ENCODE measurements at regions of chr12 and their contacts with region 1.

Region 1: GRCh38 chr12:104381731-104382480 is 74.8 kb upstream of the CHST11 start:
- DNase-seq: peak; percentile 78
- H3K4me3 ChIP-seq: peak overlapping the region in 1 of 2 experiments; percentile 3; a peak in 1 of 4 replicates
- H3K27ac ChIP-seq: no peak overlapping the region
- H3K4me1 ChIP-seq: peaks cover 0 to 1% of the 10 kb centered on the region in 2 experiments; a peak in 1 of 4 replicates
- H3K27me3 ChIP-seq: no peaks in the 10 kb centered on the region
- CTCF ChIP-seq: peak; percentile 98
- EP300 ChIP-seq: no peak
- RAD21 ChIP-seq: peak; percentile 97

Region 2: GRCh38 chr12:104365921-104366415 is 15.9 kb before region 1 on chr12:
- CTCF ChIA-PET with region 1: interaction called, 31 read pairs
- POLR2A ChIA-PET with region 1: no interaction called
- DNase-seq: no peak
- H3K4me3 ChIP-seq: no peak overlapping the region
- H3K27ac ChIP-seq: no peak overlapping the region
- H3K4me1 ChIP-seq: no peaks in the 10 kb centered on the region
- H3K27me3 ChIP-seq: no peaks in the 10 kb centered on the region
- CTCF ChIP-seq: no peak
- EP300 ChIP-seq: no peak
- RAD21 ChIP-seq: no peak

Region 3: GRCh38 chr12:104435765-104436164 is 53.9 kb after region 1 on chr12:
- CTCF ChIA-PET with region 1: interaction called, 10 read pairs
- POLR2A ChIA-PET with region 1: no interaction called
- DNase-seq: no peak
- H3K4me3 ChIP-seq: no peak overlapping the region
- H3K27ac ChIP-seq: no peak overlapping the region
- H3K4me1 ChIP-seq: no peaks in the 10 kb centered on the region
- H3K27me3 ChIP-seq: peaks cover 7% of the 10 kb centered on the region; the same call in 1 of the 2 replicates
- CTCF ChIP-seq: no peak
- EP300 ChIP-seq: no peak
- RAD21 ChIP-seq: no peak

Region 4: DNA sequence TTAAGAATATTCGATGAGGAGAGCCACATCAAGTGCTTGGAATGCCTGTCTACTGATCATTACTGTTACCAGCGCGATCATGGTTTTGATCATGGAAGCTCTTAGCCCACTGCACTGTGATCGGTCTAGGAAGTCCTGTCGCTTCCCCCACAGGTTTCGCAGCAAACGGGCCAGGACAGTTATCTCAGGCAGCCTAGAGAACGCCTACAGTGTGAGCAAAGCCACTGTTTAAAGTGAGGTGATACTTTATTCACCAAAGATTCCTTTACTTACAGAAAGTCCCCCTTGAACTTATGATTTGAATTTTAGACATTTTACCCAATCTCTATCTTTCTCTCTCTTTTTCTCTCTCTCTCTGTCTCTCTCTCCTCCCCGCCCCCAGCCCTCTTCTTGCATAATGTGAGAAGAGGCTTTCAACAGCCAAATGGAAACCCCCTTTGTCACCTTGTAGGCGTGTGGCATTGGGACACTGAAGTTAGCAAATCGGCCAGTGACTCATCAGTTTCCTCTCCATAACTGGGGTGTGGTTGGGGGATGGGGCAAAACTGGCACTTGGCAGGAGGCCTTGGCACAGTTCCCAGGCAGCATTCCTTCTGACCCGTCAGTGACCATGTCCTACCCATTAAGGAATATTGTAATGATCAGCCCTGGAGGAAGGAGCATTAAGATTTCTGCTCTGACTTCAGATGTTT is 289.6 kb after region 1 on chr12:
- CTCF ChIA-PET with region 1: interaction called, 66 read pairs
- POLR2A ChIA-PET with region 1: interaction called, 5 read pairs
- DNase-seq: peak; percentile 40
- H3K4me3 ChIP-seq: peak overlapping the region in 1 of 2 experiments; percentile 29; a peak in 1 of 4 replicates
- H3K27ac ChIP-seq: peak overlapping the region in 1 of 2 experiments; percentile 66; a peak in 3 of 4 replicates
- H3K4me1 ChIP-seq: peaks cover 25 to 62% of the 10 kb centered on the region in 2 experiments
- H3K27me3 ChIP-seq: no peaks in the 10 kb centered on the region
- CTCF ChIP-seq: no peak
- EP300 ChIP-seq: peak; percentile 32 to 91; a peak in 2 of 4 replicates
- RAD21 ChIP-seq: 0 out of 2 replicates have a peak, but pooled peaks have one; percentile 12

Region 5: GRCh38 chr12:104815935-104816334 is 434.0 kb after region 1 on chr12:
- CTCF ChIA-PET with region 1: interaction called, 10 read pairs
- POLR2A ChIA-PET with region 1: no interaction called
- DNase-seq: no peak
- H3K4me3 ChIP-seq: no peak overlapping the region
- H3K27ac ChIP-seq: no peak overlapping the region
- H3K4me1 ChIP-seq: no peaks in the 10 kb centered on the region
- H3K27me3 ChIP-seq: no peaks in the 10 kb centered on the region
- CTCF ChIP-seq: no peak
- EP300 ChIP-seq: no peak
- RAD21 ChIP-seq: no peak

Region 6: DNA sequence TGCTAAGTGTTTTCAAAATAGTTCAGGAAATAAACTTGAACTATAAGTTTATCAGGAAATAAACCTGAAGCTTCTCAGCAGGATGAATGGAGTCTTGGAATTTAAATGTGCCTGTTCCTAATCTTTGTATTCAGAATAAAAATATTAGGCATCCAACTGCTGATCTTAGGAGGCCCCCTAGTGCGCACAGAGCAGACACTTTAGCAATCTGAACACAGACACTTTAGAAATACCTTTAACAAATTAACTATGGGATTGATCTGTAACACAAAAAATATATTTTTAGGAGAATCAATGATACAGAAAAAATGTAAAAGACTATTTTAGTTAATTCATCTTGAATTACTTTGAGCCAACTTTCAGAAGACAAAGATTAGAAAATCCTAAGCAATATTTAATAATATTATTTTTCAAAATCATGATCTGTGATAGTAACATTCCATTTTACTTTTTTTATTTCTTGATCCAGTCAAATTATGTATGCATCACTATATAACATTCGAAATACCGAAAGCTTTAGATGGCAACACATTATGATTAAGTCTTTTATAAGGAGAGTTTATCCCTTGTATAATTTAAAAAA is 495.3 kb after region 1 on chr12:
- CTCF ChIA-PET with region 1: interaction called, 33 read pairs
- POLR2A ChIA-PET with region 1: no interaction called
- DNase-seq: peak; percentile 51
- H3K4me3 ChIP-seq: no peak overlapping the region
- H3K27ac ChIP-seq: no peak overlapping the region
- H3K4me1 ChIP-seq: no peaks in the 10 kb centered on the region
- H3K27me3 ChIP-seq: no peaks in the 10 kb centered on the region
- CTCF ChIP-seq: peak; percentile 87
- EP300 ChIP-seq: no peak
- RAD21 ChIP-seq: peak; percentile 98

Region 7: GRCh38 chr12:105032703-105033357 is 650.9 kb after region 1 on chr12:
- CTCF ChIA-PET with region 1: interaction called, 10 read pairs
- POLR2A ChIA-PET with region 1: no interaction called
- DNase-seq: no peak
- H3K4me3 ChIP-seq: no peak overlapping the region
- H3K27ac ChIP-seq: no peak overlapping the region
- H3K4me1 ChIP-seq: no peaks in the 10 kb centered on the region
- H3K27me3 ChIP-seq: no peaks in the 10 kb centered on the region
- CTCF ChIP-seq: no peak
- EP300 ChIP-seq: no peak
- RAD21 ChIP-seq: no peak